Heart left ventricle (tissue), 16 donors: ENCODE measurements at regions of chr3 and their contacts with region 1.

Region 1: GRCh38 chr3:144801890-144802289 is 830.3 kb downstream of the DIPK2A start:
- DNase-seq: no peak
- ATAC-seq: peak in 1 of 4 donors; percentile 29
- H3K4me3 ChIP-seq: no peak overlapping the region
- H3K27ac ChIP-seq: no peak overlapping the region
- H3K4me1 ChIP-seq: no peaks in the 10 kb centered on the region
- H3K27me3 ChIP-seq: no peaks in the 10 kb centered on the region
- CTCF ChIP-seq: no peak
- POLR2A ChIP-seq: no peak

Region 2: DNA sequence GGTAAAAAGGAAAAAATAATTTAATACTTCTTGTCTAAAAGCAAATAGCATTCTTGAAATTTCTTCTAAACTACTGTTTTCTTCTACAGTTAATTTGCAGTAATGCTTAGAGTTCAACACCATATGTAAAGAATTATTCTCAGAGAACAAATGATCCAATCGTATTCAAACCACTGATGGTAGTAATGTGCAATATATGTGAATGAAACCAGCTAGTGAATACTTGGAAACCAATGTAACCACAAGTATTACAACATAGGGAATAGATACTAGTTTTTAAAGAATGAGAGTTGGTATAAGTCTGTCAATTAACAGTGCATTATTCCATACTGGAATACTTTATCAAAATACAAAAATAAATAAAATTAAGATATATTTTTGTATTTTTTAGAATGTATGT is 19.7 kb after region 1 on chr3:
- intact Hi-C with region 1: loop called in 1 of 10 experiments (anchors 1 kb)
- DNase-seq: no peak
- ATAC-seq: no peak
- H3K4me3 ChIP-seq: no peak overlapping the region
- H3K27ac ChIP-seq: no peak overlapping the region
- H3K4me1 ChIP-seq: no peaks in the 10 kb centered on the region
- H3K27me3 ChIP-seq: no peaks in the 10 kb centered on the region
- CTCF ChIP-seq: no peak
- POLR2A ChIP-seq: no peak

Region 3: GRCh38 chr3:144859161-144859560 is 57.3 kb after region 1 on chr3:
- intact Hi-C with region 1: no loop called
- DNase-seq: no peak
- ATAC-seq: no peak
- H3K4me3 ChIP-seq: no peak overlapping the region
- H3K27ac ChIP-seq: no peak overlapping the region
- H3K4me1 ChIP-seq: no peaks in the 10 kb centered on the region
- H3K27me3 ChIP-seq: no peaks in the 10 kb centered on the region
- CTCF ChIP-seq: no peak
- POLR2A ChIP-seq: no peak